GM10248 (cell line): ENCODE measurements at regions of chr9 and their contacts with region 1.

Region 1: DNA sequence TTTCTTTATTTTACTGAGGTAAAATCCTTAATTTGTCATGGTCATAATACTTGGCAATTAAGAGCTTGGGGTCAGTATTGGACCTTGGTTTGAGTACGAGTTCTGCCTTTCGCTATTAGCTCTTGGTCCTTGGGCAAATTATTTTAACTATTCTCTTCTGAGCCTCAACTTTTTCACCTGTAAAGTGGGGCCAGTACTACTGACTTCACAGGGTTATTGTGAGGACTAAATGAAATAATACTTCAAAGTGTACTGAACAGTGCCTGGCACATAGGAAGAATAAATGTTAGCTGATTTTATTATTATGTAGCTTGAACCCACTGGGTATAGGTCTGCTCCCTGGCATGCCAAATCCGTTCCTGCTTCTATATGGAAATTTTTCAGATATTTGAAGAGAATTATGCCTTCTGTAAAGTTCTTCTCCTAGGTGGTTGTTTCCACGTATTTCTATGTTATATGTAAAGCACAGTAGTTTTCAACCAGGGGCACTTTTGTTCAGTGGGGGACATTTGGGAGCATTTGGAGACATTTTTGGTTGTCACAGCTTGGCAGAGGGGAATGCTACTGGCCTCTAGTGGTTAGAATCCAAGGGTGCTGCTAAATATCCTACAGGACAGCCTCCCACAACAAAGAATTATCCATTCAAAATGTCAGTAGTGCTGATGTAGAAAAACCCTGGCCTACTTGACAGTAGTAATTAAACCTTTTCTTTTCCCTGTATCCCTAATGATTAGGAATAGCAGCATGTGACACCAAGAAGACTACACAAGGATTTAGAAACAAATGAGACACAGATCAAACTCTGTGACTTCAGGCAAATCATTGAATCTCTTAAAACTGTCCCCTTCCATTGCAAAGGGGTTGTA is 4.5 kb downstream of the RCL1 start:
- DNase-seq: peak; percentile 24
- CTCF ChIP-seq: peak; percentile 60

Region 2: DNA sequence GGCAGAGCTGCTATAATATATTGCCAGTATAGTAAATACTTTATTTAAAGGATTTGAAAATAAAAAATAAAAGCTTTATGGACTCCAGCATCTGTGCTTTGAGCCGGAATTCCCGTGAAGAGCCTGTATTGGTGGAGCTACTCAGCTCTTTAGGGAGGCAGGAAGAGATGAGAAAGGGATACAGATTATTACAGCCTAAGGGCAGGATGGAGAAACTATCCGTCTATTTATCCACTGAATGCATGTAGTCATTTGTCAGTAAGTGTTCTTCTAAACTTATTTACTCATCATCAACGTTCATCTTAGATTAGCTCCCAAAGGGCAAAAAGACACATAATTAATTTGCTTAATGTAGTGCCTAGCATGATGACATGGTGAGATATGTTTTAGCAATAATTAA is 258.6 kb before region 1 on chr9:
- CTCF ChIA-PET with region 1: no interaction called
- POLR2A ChIA-PET with region 1: no interaction called
- DNase-seq: no peak
- CTCF ChIP-seq: no peak

Region 3: DNA sequence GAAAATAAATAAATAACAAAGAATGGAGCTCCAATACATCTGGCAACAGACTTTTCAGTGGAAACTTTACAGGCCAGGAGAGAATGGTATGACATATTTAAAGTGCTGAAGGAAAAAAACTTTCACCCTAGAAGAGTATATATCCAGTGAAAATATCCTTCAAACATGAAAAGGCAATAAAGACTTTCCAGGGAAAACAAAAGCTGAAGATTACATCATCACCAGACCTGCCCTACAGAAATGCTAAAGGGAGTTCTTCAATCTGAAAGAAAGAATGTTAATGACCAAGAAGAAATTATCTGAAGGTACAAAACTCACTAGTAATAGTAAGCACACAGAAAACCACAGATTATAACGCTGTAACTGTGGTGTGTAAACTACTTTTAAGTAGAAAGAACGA is 12.8 kb before region 1 on chr9:
- CTCF ChIA-PET with region 1: interaction called, 18 read pairs
- POLR2A ChIA-PET with region 1: no interaction called
- DNase-seq: no peak
- CTCF ChIP-seq: no peak

Region 4: DNA sequence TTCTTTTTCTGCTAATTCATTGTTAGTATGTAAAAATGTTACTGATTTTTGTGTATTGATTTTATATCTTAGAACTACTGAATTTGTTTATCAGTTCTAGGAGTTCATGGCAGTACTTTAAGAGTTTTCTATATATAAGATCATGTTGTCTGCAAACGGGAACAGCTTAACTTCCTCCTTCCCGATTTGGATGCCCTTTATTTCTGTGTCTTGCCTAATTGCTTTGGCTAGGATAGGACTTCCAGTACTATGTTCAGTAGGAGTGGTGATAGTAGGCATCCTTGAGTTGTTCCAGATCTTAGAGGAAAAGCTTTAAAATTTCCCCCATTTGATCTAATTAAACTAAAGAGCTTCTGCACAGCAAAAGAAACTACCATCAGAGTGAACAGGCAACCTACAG is 15.6 kb after region 1 on chr9:
- CTCF ChIA-PET with region 1: interaction called, 13 read pairs
- POLR2A ChIA-PET with region 1: interaction called, 4 read pairs
- DNase-seq: no peak
- CTCF ChIP-seq: no peak

Region 5: GRCh38 chr9:4927043-4927471 is 129.8 kb after region 1 on chr9:
- CTCF ChIA-PET with region 1: no interaction called
- POLR2A ChIA-PET with region 1: no interaction called
- DNase-seq: no peak
- CTCF ChIP-seq: no peak